BJ (cell line): ENCODE measurements at regions of chr11 and their contacts with region 1.

Region 1: GRCh38 chr11:130434521-130435223 is 6.3 kb upstream of the ADAMTS8 start:
- DNase-seq: no peak
- H3K4me3 ChIP-seq: peak overlapping the region; percentile 66
- H3K27me3 ChIP-seq: peaks cover 8% of the 10 kb centered on the region
- CTCF ChIP-seq: peak; percentile 84

Region 2: GRCh38 chr11:130379276-130379675 is 55.4 kb before region 1 on chr11:
- CTCF ChIA-PET with region 1: no interaction called
- POLR2A ChIA-PET with region 1: no interaction called
- DNase-seq: no peak
- H3K4me3 ChIP-seq: no peak overlapping the region
- H3K27me3 ChIP-seq: peaks cover 6% of the 10 kb centered on the region
- CTCF ChIP-seq: no peak

Region 3: DNA sequence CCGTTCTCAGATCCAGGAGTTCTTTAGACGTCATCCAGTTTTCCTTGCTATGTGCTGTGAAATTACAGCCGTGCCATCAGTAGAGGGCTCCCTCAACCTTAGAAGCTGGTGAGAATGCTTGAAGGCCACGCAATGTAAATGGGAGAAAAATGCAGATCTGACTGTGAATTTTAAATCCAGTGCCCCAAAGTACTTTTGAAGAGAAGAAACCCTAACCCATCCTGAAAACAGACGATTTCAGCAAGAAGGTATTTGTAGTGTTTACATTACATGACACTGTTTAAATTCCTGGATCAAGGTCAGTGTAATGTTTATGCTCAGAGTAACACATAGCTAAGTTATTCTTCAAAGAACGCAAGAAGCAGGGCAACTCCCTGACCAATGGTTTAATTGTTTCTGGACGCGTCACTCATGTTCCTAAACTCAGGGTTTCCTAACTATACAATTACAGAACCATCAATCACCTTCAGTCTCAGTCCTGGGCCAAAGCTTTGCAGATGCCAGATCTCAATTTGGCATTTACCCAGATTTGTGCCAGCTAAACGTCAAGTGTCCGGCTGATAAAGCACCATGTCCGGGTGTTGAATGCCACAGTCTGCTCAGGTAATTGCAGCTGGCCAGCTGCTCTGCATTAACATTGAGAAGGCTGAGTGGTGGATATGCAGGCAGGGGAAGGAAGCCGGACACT is 44.5 kb before region 1 on chr11:
- CTCF ChIA-PET with region 1: interaction called, 17 read pairs
- POLR2A ChIA-PET with region 1: no interaction called
- DNase-seq: no peak
- H3K4me3 ChIP-seq: no peak overlapping the region
- H3K27me3 ChIP-seq: peaks cover 31% of the 10 kb centered on the region
- CTCF ChIP-seq: peak; percentile 70

Region 4: GRCh38 chr11:130448416-130449309 is 14.0 kb after region 1 on chr11 and contains the start of gene ADAMTS15:
- CTCF ChIA-PET with region 1: interaction called, 15 read pairs
- POLR2A ChIA-PET with region 1: no interaction called
- DNase-seq: no peak
- H3K4me3 ChIP-seq: peak within 1 kb of the TSS; percentile 56
- H3K27me3 ChIP-seq: no peaks in the 10 kb centered on the region
- CTCF ChIP-seq: no peak
- polyA plus RNA-seq, gene ADAMTS15: 2.7 and 5.6 TPM in 2 replicates

Region 5: DNA sequence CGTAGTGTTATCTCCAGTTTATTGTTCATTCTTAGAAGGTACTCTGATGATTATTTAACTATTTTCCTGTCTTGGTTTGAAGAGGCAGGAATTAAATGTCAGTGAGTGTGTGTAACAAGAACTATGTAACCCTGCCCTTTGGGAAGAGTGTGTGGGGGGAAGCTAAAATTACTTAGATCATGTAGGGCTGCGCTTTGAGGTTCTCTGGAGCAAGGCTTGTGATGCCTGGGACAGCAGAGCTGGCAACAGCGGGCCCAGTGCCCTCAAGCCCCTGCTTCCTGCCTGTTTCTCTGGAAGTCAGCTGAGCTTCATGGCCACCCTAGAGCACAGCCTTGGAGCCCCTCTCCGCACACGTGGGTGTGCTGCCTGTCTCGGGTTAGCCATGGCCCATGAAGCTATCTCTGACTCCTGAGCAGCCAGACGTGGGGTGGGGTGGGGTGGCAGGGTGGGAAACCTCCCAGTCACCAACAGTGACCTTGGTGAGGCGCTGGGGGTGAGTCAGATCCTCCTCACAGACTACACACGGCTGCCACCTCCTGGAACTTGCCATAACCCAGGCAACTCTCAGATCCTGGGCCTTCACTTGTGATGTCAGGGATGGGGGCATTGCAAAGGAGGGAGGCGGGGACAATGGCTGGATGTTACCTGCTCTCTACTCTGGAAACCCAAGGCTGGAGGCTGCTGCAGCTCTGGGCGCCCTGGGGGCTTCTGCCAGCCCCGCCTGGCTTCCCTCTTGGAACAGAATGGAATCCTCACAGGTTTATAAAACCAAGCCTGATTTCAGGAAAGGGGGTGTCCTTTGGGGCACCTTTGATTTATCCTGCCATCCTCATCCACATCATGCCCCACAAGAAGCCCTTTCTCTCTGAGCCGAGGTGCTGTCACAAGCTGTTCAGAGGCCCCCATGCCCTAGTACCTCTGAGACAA is 393.0 kb after region 1 on chr11:
- CTCF ChIA-PET with region 1: interaction called, 58 read pairs
- POLR2A ChIA-PET with region 1: no interaction called
- DNase-seq: no peak
- H3K4me3 ChIP-seq: no peak overlapping the region
- H3K27me3 ChIP-seq: peaks cover 2% of the 10 kb centered on the region; the same call in 1 of the 2 replicates
- CTCF ChIP-seq: peak; percentile 82

Region 6: GRCh38 chr11:130852589-130852988 is 417.9 kb after region 1 on chr11:
- CTCF ChIA-PET with region 1: interaction called, 421 read pairs
- POLR2A ChIA-PET with region 1: no interaction called
- DNase-seq: no peak
- H3K4me3 ChIP-seq: no peak overlapping the region
- H3K27me3 ChIP-seq: no peaks in the 10 kb centered on the region
- CTCF ChIP-seq: no peak

Region 7: GRCh38 chr11:130894322-130895025 is 459.8 kb after region 1 on chr11:
- CTCF ChIA-PET with region 1: interaction called, 140 read pairs
- POLR2A ChIA-PET with region 1: no interaction called
- DNase-seq: no peak
- H3K4me3 ChIP-seq: no peak overlapping the region
- H3K27me3 ChIP-seq: no peaks in the 10 kb centered on the region
- CTCF ChIP-seq: peak; percentile 89